Tibial artery (tissue), 4 donors: ENCODE measurements at regions of chr5 and their contacts with region 1.

Region 1: GRCh38 chr5:172543484-172544298 is 89.4 kb upstream of the SH3PXD2B start:
- DNase-seq: peak in 1 of 2 donors; percentile 29
- H3K4me3 ChIP-seq: no peak overlapping the region
- H3K27ac ChIP-seq: no peak overlapping the region
- H3K4me1 ChIP-seq: no peaks in the 10 kb centered on the region
- H3K27me3 ChIP-seq: peaks cover 0 to 10% of the 10 kb centered on the region in 2 donors
- CTCF ChIP-seq: no peak

Region 2: DNA sequence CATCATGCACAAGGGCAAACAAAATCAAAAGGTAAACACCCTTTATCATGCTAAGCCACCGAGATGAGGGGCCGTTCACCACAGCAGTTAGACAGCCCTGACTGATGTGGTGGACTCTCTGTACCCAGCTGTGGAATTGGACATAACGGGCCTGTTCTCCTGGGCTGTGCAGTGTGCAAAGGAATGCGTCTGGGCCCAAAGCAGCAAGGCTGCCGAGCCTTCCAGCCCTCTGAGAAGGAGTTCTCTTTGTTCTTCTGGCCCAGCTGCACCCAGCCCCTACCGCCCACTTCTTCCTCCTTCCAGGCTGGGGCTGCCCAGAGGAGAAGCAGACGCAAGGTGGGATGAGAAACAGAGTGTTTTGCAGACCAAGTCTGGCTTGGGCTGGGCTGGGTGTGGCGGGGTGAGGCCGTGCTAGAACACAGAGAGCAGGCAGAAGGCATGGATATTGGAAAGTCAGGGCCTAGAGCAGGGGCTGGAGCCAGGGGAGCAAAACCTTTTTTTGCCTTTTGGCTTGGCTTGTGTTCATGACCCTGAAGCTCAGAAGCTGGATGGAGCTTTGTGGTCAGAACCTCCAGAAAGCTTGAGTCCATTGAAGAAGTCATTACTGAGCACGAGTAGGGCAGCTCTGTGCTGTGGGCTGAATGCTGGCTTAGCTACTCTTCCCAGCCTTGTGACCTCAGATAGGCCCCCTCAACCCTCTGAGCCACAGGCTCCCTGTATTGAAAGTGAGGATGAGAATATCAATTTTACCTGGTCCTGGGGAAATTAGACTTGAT is 39.6 kb before region 1 on chr5:
- intact Hi-C with region 1: loop called (anchors 2 kb)
- DNase-seq: peak in 1 of 2 donors; percentile 58
- H3K4me3 ChIP-seq: no peak overlapping the region
- H3K27ac ChIP-seq: peak overlapping the region in 1 of 2 donors; percentile 12
- H3K4me1 ChIP-seq: peaks cover 0 to 8% (median 0%) of the 10 kb centered on the region in 4 donors
- H3K27me3 ChIP-seq: no peaks in the 10 kb centered on the region
- CTCF ChIP-seq: no peak

Region 3: DNA sequence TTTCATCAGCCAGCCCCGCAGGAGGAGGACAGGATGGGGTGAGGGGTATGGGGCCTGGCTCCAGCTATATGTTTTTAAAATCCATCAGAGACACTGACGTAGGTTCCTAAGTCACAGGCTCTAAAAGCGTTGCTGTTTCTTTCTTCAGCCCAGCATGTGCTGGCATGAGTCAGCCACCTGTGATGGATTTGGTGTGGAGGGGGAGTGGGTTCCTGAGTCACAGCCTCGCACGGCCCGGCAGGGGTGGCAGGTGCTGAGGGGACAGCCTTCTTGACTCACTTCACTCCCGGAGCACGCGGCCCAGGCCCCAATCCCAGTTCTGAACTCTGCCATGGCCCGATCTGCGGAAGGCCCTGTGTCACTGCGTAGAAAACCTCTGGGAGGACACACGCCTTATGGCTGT is 376.8 kb after region 1 on chr5:
- intact Hi-C with region 1: no loop called
- DNase-seq: peak in 1 of 2 donors; percentile 91
- H3K4me3 ChIP-seq: no peak overlapping the region
- H3K27ac ChIP-seq: peak overlapping the region; percentile 68 to 80
- H3K4me1 ChIP-seq: peaks cover 0 to 22% (median 13%) of the 10 kb centered on the region in 4 donors
- H3K27me3 ChIP-seq: no peaks in the 10 kb centered on the region
- CTCF ChIP-seq: no peak

Region 4: DNA sequence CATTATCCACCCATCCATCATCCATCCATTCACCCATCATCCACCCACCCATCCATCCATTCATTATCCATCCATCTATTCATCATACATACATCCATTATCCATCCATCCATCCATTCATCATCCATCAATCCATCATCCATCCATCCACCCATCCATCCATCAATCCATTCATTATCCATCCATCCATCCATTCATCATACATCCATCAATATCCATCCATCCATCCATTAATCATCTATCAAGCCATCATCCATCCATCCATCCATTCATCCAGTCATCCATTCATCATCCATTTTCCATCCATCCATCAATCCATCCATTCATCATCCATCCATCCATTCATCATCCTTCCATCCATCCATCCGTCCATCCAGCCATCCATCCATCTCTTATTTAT is 1590.9 kb after region 1 on chr5:
- intact Hi-C with region 1: no loop called
- DNase-seq: no peak
- H3K4me3 ChIP-seq: no peak overlapping the region
- H3K27ac ChIP-seq: no peak overlapping the region
- H3K4me1 ChIP-seq: no peaks in the 10 kb centered on the region
- H3K27me3 ChIP-seq: no peaks in the 10 kb centered on the region
- CTCF ChIP-seq: no peak